Testis (tissue), 5 donors: ENCODE measurements at regions of chr2 and their contacts with region 1.

Region 1: GRCh38 chr2:69306822-69307578 is 80.0 kb downstream of the GFPT1 start:
- DNase-seq: peak; percentile 85
- H3K4me3 ChIP-seq: peak overlapping the region; percentile 53 to 60
- H3K27ac ChIP-seq: peak overlapping the region; percentile 26 to 76
- H3K4me1 ChIP-seq: peaks cover 9% of the 10 kb centered on the region
- H3K27me3 ChIP-seq: no peaks in the 10 kb centered on the region
- CTCF ChIP-seq: peak; percentile 74 to 81 (median 74)
- POLR2A ChIP-seq: no peak

Region 2: DNA sequence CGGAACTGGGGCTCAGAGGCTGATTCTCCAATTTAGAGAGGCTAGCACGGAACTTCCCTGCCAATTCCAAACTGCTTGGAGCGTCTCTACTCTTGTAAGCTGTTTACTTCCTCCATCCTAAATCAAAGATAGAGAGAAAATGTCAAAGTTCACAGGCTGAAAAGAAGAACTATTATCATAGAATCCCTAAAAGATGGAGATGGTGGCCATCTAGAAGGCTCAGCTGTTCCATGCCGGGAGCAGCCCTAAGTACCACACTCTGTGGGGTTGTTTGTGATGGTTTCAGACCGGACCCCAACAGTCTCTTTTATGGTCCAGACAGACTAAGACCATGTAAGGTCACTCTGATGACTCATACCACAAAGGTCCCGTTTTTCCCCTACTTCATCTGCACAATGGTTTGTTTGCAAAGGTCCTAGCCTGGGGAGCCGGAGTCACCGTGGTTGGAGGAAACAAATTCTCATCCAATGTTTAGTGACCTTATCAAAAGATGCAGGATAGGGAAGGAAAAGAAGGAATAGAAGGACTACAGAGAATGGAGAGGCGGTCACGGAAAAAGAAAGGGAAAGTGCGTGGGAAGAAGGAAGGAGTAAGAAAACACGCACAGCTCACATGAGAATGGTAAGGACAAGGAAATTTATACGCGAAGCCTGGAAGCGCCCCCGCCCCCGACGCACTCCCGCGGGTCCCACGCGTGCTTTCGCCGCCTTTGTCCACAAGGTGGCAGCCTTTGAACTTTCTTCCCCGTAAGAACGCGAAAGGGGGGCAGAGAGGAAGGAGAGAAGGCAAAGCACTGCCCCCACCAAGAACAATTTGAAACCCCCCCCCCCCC is 294.5 kb before region 1 on chr2:
- intact Hi-C with region 1: loop called (anchors 2 kb)
- DNase-seq: peak; percentile 74
- H3K4me3 ChIP-seq: peak overlapping the region; percentile 66 to 84
- H3K27ac ChIP-seq: peak overlapping the region; percentile 63 to 80
- H3K4me1 ChIP-seq: peaks cover 11% of the 10 kb centered on the region
- H3K27me3 ChIP-seq: no peaks in the 10 kb centered on the region
- CTCF ChIP-seq: peak; percentile 69 to 82 (median 78)
- POLR2A ChIP-seq: no peak